A673 (cell line): ENCODE measurements at regions of chr4 and their contacts with region 1.

Region 1: GRCh38 chr4:114077610-114078009 is 98.2 kb upstream of the ARSJ start:
- DNase-seq: peak; percentile 79
- H3K4me3 ChIP-seq: no peak overlapping the region
- H3K27ac ChIP-seq: no peak overlapping the region
- H3K4me1 ChIP-seq: peaks cover 5% of the 10 kb centered on the region
- H3K27me3 ChIP-seq: no peaks in the 10 kb centered on the region
- CTCF ChIP-seq: no peak

Region 2: DNA sequence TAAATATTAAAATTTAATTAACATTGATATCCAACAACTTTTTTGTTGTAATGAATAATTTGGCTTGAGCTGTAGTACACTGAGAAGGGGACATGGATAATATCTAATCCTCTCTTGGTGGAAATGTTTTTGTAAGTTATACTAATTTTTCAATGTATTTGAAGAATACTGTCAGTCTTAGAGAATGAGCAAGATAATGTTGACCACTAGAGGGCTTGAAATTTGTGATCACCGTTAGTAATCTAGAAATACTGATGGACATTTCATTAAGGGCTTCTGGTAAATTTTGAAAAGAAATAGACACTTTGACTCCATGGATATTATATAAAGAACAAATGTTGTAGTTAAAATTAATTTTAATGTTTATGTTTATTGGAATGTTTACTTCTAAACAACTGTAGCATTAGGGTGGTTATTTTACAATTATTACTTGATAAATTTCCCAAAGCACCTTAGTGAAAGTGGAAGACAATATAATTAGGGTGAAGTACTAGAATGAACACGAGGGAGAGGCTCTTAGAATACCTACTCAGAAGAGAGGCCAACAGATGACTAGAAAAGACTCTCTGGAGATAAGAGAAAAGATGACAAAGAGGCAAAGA is 296.1 kb before region 1 on chr4:
- CTCF ChIA-PET with region 1: no interaction called
- POLR2A ChIA-PET with region 1: no interaction called
- intact Hi-C with region 1: loop called (anchors 10 kb)
- DNase-seq: peak; percentile 56
- H3K4me3 ChIP-seq: no peak overlapping the region
- H3K27ac ChIP-seq: no peak overlapping the region
- H3K4me1 ChIP-seq: peaks cover 7% of the 10 kb centered on the region
- H3K27me3 ChIP-seq: no peaks in the 10 kb centered on the region
- CTCF ChIP-seq: peak; percentile 78

Region 3: DNA sequence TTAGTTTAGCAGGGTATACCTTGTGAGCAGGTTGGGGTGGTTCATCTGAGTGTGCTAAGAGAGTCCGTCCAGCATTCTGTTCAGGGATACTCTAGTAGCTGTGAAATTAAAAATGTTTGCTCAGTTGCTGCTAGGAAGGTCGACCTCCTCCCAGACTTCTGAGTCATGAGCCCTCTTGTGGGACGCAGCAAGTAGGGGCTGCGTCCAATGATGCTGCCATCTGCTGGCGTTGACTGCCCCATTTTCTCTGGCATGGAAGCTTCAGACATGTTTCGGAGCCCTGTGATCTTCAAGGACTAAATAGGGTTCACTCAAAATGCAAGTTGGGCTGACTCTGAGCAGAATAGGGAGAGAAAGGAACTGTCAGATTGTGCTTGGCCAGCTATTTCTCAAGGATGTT is 102.9 kb after region 1 on chr4:
- CTCF ChIA-PET with region 1: no interaction called
- POLR2A ChIA-PET with region 1: no interaction called
- intact Hi-C with region 1: loop called (anchors 5 kb)
- DNase-seq: peak; percentile 82
- H3K4me3 ChIP-seq: no peak overlapping the region
- H3K27ac ChIP-seq: no peak overlapping the region
- H3K4me1 ChIP-seq: no peaks in the 10 kb centered on the region
- H3K27me3 ChIP-seq: no peaks in the 10 kb centered on the region
- CTCF ChIP-seq: peak; percentile 83

Region 4: GRCh38 chr4:114287079-114287696 is 209.6 kb after region 1 on chr4:
- CTCF ChIA-PET with region 1: no interaction called
- POLR2A ChIA-PET with region 1: no interaction called
- intact Hi-C with region 1: no loop called
- DNase-seq: no peak
- H3K4me3 ChIP-seq: no peak overlapping the region
- H3K27ac ChIP-seq: no peak overlapping the region
- H3K4me1 ChIP-seq: peaks cover 4% of the 10 kb centered on the region
- H3K27me3 ChIP-seq: no peaks in the 10 kb centered on the region
- CTCF ChIP-seq: no peak

Region 5: DNA sequence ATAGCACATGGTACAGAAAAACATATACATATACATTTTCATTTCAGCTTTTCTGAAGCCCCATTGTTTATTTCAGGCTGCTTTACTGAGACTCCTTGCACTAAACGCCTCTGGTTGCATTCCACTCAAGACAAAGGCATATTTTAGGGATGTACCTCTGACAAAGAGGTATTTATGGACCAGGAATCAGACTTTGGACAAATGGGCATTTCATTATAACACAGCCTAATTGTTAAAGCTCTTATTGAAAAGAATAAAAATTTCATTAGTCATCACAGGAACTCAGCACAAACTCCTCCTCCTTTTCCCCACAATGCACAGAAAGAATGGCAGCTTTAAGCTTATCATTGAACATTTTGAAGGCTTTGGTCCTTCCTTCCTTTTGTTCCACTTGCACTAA is 458.1 kb after region 1 on chr4:
- CTCF ChIA-PET with region 1: no interaction called
- POLR2A ChIA-PET with region 1: no interaction called
- intact Hi-C with region 1: no loop called
- DNase-seq: no peak
- H3K4me3 ChIP-seq: no peak overlapping the region
- H3K27ac ChIP-seq: no peak overlapping the region
- H3K4me1 ChIP-seq: no peaks in the 10 kb centered on the region
- H3K27me3 ChIP-seq: no peaks in the 10 kb centered on the region
- CTCF ChIP-seq: no peak